ENCODE measurements at regions of chr3 and their contacts with region 1.

Region 1: DNA sequence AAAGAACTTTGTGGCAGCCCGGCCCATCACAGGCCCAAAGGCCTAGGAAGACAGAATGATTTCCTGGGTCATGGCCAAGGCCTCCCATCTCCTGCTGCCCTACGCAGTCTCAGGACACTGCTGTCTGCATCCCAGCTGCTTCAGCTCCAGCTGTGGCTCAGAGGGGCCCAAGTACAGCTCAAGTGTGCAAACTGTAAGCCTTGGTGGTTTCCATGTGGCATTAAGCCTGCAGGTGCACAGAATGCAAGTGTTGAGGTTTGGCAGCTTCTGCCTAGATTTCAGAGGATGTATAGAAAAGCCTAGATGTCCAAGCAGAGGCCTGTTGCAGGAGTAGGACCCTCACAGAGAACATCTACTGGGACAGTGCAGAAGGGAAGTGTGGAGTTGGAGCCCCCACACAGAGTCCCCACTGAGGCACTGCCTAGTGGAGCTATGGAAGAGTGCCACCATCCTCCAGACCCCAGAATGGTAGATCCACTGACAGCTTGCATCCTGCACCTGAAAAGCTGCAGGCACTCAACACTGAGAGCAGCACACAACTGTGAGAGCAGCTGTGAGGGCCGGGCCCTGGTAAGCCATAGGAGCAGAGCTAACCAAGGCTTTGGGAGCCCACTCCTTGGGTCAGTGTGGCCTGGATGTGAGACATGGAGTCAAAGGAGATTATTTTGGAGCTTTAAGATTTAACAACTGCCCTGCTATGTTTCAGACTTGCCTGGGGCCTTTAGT is 208.2 kb upstream of the CMC1 start:
- DNase-seq: no peak
- ATAC-seq: no peak

Region 2: GRCh38 chr3:27827041-27827440 is 206.2 kb before region 1 on chr3:
- intact Hi-C with region 1: no loop called
- DNase-seq: no peak
- ATAC-seq: no peak

Region 3: DNA sequence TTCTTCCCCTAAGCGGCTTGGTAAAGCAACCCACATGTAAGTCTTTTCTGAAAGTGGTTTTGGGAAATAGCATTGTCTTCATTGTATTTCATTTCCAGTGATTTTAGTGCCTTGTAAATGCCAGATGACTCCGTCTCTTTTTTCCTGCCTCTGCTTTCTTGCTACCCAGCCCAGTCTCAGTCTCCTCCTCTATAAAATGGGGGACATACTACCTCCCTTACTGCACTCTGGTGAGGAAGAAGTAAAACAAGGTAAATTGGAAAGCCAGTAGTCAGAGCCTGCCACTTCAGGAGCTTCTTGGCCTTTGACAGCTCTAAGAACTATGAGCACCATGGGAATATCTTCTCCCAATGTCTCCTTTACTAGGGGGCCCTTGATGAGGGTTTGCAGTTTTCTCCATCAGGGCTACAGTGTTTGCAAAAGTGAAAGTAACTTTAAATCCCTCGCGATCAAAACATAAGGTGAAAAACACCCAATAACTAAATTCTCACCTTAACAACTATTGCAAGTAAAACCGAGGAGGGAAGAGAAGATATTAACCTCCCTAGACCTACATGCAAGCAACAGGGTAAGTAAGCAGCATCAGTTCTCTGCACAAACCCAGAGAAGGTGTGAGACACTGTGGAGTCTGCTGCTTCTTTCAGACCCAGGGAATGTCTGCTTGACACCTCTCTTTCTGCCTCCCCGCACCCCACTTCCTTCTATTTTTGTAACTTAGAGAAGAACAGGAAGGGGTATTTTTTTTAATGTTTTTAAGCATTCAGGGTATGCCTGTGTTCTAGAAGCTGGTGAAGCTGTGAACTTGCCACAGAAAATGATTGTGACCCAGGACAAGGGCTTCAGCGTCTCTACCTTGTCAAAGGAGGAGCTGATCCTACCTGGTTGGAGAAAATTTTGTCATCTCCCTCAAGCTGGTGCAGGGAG is 152.0 kb before region 1 on chr3:
- intact Hi-C with region 1: no loop called
- DNase-seq: no peak
- ATAC-seq: no peak

Region 4: GRCh38 chr3:28081533-28081947 is 48.3 kb after region 1 on chr3:
- intact Hi-C with region 1: loop called (anchors 2 kb)
- DNase-seq: no peak
- ATAC-seq: no peak

Measured in left ventricle myocardium superior (tissue), 1 donor.